Activated CD4-positive, alpha-beta memory T cell treated with anti-CD3 and anti-CD28 coated beads for 36 hours (primary cell): ENCODE measurements at regions of chr7 and their contacts with region 1.

Region 1: DNA sequence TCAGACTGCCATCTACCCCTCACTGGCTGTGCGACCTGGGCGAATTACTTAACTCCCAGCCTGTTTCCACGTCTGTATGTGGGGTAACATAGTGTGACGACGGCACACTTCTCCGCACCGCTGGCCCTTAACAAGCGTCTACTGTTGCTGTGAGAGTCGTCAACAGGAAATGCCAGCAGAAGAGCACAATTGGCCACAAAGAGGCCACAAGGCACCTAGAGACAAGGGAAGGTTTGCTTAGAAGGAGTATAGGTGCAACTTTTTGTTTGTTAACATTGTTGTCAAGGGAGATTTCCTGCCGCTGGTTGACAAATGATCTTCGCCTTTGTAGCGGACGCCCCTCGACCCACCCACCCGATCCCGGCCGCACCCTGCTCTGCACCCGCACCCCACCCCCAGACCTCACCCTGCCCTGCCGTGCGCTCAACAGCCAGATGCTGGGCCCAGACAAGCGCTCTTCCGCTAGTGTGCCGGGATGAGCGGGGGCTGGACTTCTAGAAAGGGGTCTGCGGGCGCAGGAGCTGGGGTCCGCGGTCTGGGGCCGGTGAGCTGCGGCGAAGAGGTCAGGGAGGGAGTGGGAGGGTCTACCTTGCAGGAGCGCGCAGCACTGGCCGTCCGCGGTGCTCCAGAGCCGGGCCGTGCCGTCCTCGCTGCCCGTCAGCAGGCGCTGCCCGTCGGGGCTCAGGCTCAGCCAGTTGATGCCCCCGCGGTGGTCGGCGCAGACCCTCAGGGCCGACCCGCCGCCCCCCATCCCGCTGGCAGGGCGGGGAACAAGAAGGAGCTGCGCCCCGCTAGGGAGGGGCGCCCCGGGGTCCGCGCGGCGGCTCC is 785 bp downstream of the WDR86 start:
- DNase-seq: peak; percentile 62
- H3K4me3 Mint-ChIP-seq: peak overlapping the region; percentile 67
- H3K27ac Mint-ChIP-seq: peak overlapping the region; percentile 29
- H3K4me1 Mint-ChIP-seq: peaks cover 29% of the 10 kb centered on the region
- H3K27me3 Mint-ChIP-seq: peaks cover 21% of the 10 kb centered on the region

Region 2: DNA sequence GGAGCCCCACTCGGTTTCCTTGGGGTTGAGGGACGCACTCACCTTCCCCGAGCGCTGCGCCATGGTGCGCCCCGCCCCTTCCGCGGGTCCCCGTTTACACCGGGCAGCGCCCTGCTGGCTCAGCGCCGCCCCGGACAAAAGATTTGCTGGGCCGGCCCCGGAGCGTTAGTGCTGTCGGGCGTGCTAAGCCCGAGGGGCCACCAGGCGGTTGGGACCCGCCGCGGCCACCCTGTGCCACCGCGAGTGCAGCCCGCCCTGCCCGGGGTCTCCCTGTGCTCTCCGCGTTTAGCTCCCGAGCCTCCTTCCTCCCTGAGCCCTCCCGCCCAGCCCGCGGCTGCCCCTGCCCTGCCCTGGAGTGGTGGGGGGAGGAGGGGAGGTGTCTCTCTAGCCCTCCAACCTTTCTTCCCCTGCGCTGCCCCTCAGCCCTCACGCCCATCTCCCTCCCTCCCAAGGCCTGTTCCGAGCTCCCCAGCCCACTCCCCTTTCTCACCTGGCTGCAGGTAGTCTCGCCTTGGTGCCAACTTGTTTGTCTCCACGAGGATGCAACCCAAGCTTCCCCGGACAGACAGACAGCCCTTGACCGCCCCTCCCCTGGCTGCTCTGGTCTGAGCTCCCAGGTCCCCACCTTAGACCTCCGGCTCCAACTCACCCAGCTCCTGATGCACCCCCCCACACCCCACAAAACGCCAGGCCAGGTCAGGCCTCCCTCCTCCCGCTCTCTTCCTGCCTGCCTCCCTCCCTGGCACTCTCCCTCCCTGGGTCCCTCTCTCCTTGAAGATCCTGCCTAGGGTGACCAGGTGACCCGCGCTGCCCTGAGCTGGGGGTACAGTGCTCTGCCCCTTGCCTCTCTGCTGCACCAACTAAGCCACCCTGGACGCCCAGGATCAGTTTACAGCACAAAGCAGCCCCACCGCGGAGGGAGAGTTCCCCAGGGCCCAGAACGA is 31.1 kb after region 1 on chr7 and contains the start of gene CRYGN:
- CTCF ChIA-PET with region 1: no interaction called
- POLR2A ChIA-PET with region 1: no interaction called
- intact Hi-C with region 1: loop called (anchors 1 kb)
- DNase-seq: no peak
- H3K4me3 Mint-ChIP-seq: peak within 1 kb of the TSS; percentile 41
- H3K27ac Mint-ChIP-seq: no peak within 1 kb of the TSS
- H3K4me1 Mint-ChIP-seq: peaks cover 28% of the 10 kb centered on the region
- H3K27me3 Mint-ChIP-seq: no peaks in the 10 kb centered on the region
- total RNA-seq, gene CRYGN: 0.21 TPM in 1 of 2 experiments, not detected in the other

Region 3: DNA sequence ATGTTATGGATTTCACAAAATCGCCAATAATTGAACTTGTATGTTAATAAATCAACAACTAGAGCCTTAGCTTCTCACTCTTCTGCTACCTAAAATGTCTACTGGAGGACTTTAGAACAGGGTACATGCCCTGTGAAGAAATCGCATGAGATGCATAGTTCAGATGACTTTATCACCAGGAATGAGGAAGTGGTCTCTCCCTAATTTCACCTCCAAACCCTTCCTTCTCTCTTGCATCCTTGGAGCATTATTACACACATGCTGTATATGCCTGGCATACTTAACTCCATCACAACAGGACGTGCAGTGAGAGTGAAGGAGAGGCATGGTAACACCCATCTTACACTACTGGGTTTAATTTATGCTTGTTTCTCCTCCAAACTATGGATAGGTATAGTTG is 82.8 kb after region 1 on chr7:
- CTCF ChIA-PET with region 1: no interaction called
- POLR2A ChIA-PET with region 1: no interaction called
- intact Hi-C with region 1: no loop called
- DNase-seq: no peak
- H3K4me3 Mint-ChIP-seq: no peak overlapping the region
- H3K27ac Mint-ChIP-seq: no peak overlapping the region
- H3K4me1 Mint-ChIP-seq: peaks cover 28% of the 10 kb centered on the region
- H3K27me3 Mint-ChIP-seq: no peaks in the 10 kb centered on the region